PC-3 (cell line): ENCODE measurements at regions of chr2 and their contacts with region 1.

Region 1: GRCh38 chr2:28958689-28959088 is 22.4 kb upstream of the TOGARAM2 start:
- DNase-seq: peak; percentile 93
- ATAC-seq: peak; percentile 82
- H3K4me3 ChIP-seq: no peak overlapping the region
- H3K27ac ChIP-seq: no peak overlapping the region
- H3K4me1 ChIP-seq: peaks cover 7% of the 10 kb centered on the region; the same call in 1 of the 2 replicates
- H3K27me3 ChIP-seq: no peaks in the 10 kb centered on the region
- CTCF ChIP-seq: peak; percentile 78

Region 2: GRCh38 chr2:27754138-27754588 is 1204.5 kb before region 1 on chr2:
- CTCF ChIA-PET with region 1: no interaction called
- POLR2A ChIA-PET with region 1: no interaction called
- intact Hi-C with region 1: no loop called
- DNase-seq: peak; percentile 89
- ATAC-seq: peak; percentile 99
- H3K4me3 ChIP-seq: no peak overlapping the region
- H3K27ac ChIP-seq: no peak overlapping the region
- H3K4me1 ChIP-seq: peaks cover 10% of the 10 kb centered on the region; the same call in 1 of the 2 replicates
- H3K27me3 ChIP-seq: no peaks in the 10 kb centered on the region
- CTCF ChIP-seq: peak; percentile 98

Region 3: DNA sequence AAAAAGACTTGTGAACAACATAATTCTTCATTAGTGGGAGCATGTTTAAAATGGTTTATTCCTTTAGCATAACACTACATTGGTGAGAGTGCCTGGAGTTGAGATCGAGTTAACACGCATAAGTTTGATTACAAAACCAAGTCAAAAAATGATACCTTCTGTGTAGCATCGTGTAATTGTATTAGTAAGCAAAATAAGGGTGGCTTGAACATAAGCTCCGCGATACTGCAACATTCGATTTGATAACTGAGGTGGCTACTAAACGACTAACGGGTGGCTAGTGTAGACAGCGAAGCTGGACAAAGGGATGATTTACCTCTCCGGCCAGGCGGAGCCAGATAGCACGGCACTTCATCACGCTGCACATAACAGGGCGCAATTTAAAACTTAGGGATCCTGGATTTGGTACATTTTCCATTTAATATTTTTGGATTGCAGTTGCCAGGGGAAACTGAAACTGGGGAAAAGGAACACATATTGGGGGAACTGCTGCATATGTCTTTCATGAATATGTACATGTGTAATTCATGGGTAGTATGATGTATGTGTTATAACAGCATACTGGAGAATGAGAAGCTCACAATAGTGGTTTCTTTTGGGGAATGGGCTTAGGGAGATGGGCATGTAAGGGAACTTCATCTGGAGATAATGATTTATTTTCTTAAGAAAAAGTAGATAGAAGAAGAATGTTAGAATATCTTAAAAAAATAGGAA is 14.0 kb before region 1 on chr2:
- CTCF ChIA-PET with region 1: no interaction called
- POLR2A ChIA-PET with region 1: no interaction called
- intact Hi-C with region 1: no loop called
- DNase-seq: no peak
- ATAC-seq: no peak
- H3K4me3 ChIP-seq: no peak overlapping the region
- H3K27ac ChIP-seq: no peak overlapping the region
- H3K4me1 ChIP-seq: no peaks in the 10 kb centered on the region
- H3K27me3 ChIP-seq: no peaks in the 10 kb centered on the region
- CTCF ChIP-seq: no peak

Region 4: GRCh38 chr2:29033172-29033571 is 74.5 kb after region 1 on chr2:
- CTCF ChIA-PET with region 1: no interaction called
- POLR2A ChIA-PET with region 1: no interaction called
- intact Hi-C with region 1: no loop called
- DNase-seq: peak; percentile 72
- ATAC-seq: peak; percentile 96
- H3K4me3 ChIP-seq: no peak overlapping the region
- H3K27ac ChIP-seq: no peak overlapping the region
- H3K4me1 ChIP-seq: peaks cover 10% of the 10 kb centered on the region; the same call in 1 of the 2 replicates
- H3K27me3 ChIP-seq: no peaks in the 10 kb centered on the region
- CTCF ChIP-seq: no peak

Region 5: GRCh38 chr2:29075894-29076705 is 117.4 kb after region 1 on chr2:
- CTCF ChIA-PET with region 1: no interaction called
- POLR2A ChIA-PET with region 1: no interaction called
- intact Hi-C with region 1: no loop called
- DNase-seq: peak; percentile 30
- ATAC-seq: peak; percentile 18; the same call in 1 of the 2 replicates
- H3K4me3 ChIP-seq: no peak overlapping the region
- H3K27ac ChIP-seq: no peak overlapping the region
- H3K4me1 ChIP-seq: no peaks in the 10 kb centered on the region
- H3K27me3 ChIP-seq: no peaks in the 10 kb centered on the region
- CTCF ChIP-seq: no peak

Region 6: DNA sequence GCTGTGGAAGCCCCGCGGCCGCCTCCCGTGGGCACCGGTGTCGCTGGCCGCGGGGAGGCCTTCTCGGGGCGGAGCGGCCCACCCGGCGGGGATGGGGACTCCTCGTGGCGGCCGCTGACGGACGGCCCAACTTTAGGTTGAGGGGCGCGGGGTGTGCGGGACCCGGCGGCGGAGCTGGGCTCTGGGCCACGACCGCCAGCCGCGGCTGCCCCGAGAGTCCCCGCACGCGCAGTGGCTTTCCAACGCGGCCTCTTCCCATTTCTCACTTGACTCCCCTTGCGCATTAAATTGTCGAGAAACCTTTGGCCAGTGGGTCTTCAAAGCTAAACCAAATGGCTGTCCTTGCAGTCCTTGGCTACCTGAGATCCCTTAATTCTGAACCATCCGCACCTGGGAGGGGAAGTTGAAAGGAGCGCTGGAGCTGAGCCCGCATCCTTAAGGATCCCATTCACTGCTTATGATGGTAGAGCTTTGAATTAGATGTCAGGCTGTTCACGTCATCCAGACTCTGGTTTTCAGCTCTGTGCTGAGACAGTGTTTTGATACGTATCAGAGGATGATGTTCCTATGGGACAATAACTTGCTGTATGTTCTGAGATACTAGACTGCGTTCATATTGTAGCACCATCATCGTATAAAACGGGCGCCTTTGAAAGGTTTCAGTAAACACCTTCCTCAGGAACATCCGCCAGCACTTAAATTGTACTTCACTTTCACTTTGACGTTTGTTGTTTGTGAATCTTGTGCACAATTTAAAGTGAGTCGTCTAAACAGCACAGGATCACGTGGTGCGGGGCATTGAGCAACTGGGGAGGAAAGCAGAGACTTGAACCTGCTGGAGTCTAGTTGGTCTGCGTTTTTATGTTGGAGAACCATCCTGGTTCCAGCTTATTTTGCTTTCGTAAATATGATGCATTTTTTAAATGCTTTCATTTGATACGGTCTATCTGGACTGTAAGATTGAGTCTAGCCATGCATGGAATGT is 157.4 kb after region 1 on chr2:
- CTCF ChIA-PET with region 1: no interaction called
- POLR2A ChIA-PET with region 1: no interaction called
- intact Hi-C with region 1: loop called (anchors 5 kb)
- DNase-seq: peak; percentile 62
- ATAC-seq: peak; percentile 6
- H3K4me3 ChIP-seq: peak overlapping the region; percentile 82
- H3K27ac ChIP-seq: peak overlapping the region; percentile 88
- H3K4me1 ChIP-seq: peaks cover 69% of the 10 kb centered on the region
- H3K27me3 ChIP-seq: no peaks in the 10 kb centered on the region
- CTCF ChIP-seq: no peak

Region 7: GRCh38 chr2:29295857-29296256 is 337.2 kb after region 1 on chr2:
- CTCF ChIA-PET with region 1: no interaction called
- POLR2A ChIA-PET with region 1: no interaction called
- intact Hi-C with region 1: loop called (anchors 10 kb)
- DNase-seq: peak; percentile 61
- ATAC-seq: peak; percentile 82
- H3K4me3 ChIP-seq: no peak overlapping the region
- H3K27ac ChIP-seq: no peak overlapping the region
- H3K4me1 ChIP-seq: no peaks in the 10 kb centered on the region
- H3K27me3 ChIP-seq: 0 out of 2 replicates have a peak, but pooled peaks cover 10% of the 10 kb centered on the region
- CTCF ChIP-seq: peak; percentile 78

Region 8: GRCh38 chr2:30026087-30027055 is 1067.7 kb after region 1 on chr2:
- CTCF ChIA-PET with region 1: no interaction called
- POLR2A ChIA-PET with region 1: no interaction called
- intact Hi-C with region 1: loop called (anchors 2 kb)
- DNase-seq: peak; percentile 96
- ATAC-seq: peak; percentile 93
- H3K4me3 ChIP-seq: peak overlapping the region; percentile 19; the same call in 1 of the 2 replicates
- H3K27ac ChIP-seq: peak overlapping the region; percentile 77
- H3K4me1 ChIP-seq: peaks cover 33% of the 10 kb centered on the region
- H3K27me3 ChIP-seq: no peaks in the 10 kb centered on the region
- CTCF ChIP-seq: peak; percentile 94